ENCODE measurements at regions of chr15 and their contacts with region 1.

Region 1: DNA sequence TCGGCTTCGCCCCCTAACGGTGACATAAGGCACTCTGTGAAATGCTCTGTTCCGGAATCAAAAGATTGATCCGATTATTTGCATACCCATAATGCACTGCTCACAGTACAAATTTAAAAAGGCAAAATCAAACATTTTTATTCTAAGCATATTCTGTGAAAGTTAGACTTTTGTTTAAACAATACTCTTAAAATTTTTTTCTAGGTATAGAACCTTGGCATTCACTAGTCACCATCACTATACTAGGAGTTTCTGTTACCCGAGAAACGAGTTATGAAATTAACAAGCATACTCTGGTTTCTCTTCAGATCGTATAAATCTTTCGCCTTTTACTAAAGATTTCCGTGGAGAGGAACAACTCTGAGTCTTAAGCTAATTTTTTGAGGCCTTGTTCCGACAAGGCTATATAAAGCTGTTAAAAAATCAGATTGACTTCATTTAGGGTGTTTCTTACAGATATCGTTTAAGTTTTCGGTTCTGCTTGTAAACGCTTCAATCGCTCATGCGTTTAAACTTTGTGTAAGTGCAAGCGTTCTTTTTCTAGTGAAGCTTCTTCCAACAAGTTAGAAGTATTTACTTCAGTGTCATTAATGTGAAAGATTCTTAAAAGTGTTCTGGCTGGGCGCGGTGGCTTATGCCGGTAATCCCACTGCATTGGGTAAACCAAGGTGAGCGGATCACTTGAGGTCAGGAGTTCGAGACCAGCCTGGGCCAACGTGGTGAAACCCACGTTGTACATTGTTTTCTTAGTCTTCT is at the start of gene RNU5B-1:
- DNase-seq: peak; percentile 82
- CTCF ChIP-seq: peak; percentile 89

Region 2: DNA sequence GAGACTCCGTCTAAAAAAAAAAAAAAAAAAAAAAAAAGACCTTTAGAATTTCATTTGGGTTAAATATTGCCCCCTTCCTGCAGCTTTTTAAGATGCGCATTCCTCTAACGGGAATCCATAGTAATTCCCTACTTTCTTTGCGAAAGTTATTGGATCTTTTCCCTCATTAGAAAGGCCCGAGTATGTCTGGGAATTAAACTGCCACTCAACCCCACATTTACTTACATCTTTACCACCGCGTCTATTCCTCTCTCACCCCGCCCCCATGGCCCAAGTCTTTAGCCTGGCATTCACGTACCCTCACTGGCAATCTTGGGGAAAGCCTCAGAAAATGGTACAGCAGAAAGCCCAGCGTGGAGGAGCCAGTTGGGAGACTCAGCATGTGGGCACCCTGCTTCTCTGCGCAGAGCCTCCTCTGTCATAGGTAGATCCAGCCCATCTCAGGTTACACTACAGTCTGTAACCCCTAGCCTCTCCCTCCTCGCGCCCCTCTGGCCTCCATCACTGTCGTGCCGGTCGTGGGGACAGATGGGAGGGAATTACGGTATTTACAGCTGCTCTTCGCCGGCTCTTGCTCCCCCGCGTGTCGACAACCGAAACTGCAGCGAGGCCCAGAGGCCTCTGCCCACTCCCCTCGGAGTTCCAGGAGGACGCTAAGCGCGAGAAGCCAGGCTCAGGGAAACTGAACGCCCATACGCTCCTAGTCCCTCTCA is 399.3 kb before region 1 on chr15:
- CTCF ChIA-PET with region 1: no interaction called
- POLR2A ChIA-PET with region 1: no interaction called
- DNase-seq: peak; percentile 85
- CTCF ChIP-seq: peak; percentile 93

Region 3: GRCh38 chr15:65184868-65185738 is 119.5 kb before region 1 on chr15 and contains the start of gene CLPX:
- CTCF ChIA-PET with region 1: interaction called, 19 read pairs
- POLR2A ChIA-PET with region 1: interaction called, 41 read pairs
- DNase-seq: peak; percentile 94
- CTCF ChIP-seq: no peak

Region 4: GRCh38 chr15:65249641-65250040 is 54.9 kb before region 1 on chr15:
- CTCF ChIA-PET with region 1: interaction called, 3 read pairs
- POLR2A ChIA-PET with region 1: interaction called, 15 read pairs
- DNase-seq: peak; percentile 80
- CTCF ChIP-seq: no peak

Region 5: DNA sequence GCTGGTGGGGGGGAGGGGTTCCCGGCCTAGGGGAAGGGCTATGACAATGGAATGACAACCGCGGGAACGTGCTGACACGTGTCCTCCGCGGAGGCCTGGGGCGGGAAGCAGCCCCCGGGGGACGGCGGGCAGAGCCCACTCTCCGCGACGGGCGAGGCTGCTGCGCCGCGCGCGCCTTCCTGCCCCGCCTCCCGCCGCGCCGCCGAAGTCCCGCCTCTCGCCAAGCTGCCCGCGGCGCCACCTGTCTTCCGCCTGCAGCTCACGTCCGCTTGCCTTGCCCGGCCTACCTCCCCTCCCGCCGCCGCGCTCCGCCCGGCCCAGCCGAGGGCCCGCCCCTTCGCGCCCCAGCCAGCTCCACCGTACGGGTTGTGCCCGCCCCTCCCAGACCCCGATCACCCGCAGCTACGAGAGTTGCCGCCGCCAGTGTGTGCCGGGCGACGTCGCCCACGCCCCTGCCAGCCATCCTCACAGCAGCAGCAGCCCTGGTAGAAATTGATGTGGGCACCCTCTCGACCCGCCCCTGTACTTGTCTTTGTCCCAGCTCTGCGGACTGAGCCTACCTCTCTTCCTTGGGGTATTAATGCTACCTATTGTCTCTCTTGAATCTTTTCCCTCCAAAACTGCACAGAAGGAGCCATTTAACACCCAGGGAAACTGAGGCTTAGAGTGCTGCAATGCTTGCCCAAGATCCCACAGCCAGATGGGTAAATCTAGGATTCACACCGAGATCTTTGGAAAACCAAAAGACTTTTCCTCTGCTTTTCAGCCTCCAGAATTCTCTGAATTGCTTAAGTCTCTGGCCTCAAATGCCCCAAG is 17.7 kb before region 1 on chr15 and contains the start of gene PARP16:
- CTCF ChIA-PET with region 1: interaction called, 11 read pairs
- POLR2A ChIA-PET with region 1: interaction called, 81 read pairs
- DNase-seq: peak; percentile 92
- CTCF ChIP-seq: peak; percentile 60

Region 6: GRCh38 chr15:65318870-65319356 is 14.3 kb after region 1 on chr15:
- CTCF ChIA-PET with region 1: interaction called, 24 read pairs
- POLR2A ChIA-PET with region 1: interaction called, 33 read pairs
- DNase-seq: peak; percentile 89
- CTCF ChIP-seq: peak; percentile 86

Region 7: DNA sequence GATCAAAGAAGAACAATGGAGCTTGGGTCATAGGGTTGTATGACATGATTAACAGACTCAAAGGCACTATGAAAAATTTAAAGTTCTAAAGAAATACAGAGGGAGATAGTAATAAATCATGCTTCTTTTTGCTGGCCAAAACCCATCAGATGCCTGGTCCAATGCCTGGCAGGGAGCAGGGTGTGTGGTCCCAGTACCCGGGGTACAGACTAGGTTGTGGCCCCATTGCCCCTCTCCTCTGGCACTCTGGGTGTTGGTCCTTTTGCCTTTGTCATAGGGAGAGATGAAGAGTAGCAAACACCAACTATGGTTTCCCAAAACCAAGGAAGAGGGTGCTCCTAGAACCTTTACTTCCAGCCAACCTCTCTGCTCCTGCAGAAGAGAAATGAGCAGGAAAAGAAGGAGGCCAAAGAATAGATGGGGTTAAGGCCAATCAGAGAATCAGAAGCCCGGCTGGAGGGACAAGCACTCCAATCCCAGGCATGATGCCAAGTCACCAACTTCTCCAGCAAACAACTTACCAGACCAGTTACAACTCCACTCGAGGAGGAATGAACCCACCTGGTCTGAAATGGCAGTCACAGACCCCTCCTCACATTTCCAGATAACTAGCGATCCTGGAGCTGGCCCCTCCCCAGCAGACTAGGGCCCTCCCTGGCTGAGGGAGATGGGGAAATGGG is 71.4 kb after region 1 on chr15:
- CTCF ChIA-PET with region 1: no interaction called
- POLR2A ChIA-PET with region 1: no interaction called
- DNase-seq: no peak
- CTCF ChIP-seq: no peak

Region 8: GRCh38 chr15:65395567-65396185 is 91.1 kb after region 1 on chr15:
- CTCF ChIA-PET with region 1: interaction called, 4 read pairs
- POLR2A ChIA-PET with region 1: interaction called, 13 read pairs
- DNase-seq: no peak
- CTCF ChIP-seq: no peak